Right cardiac atrium (tissue), 5 donors: ENCODE measurements at regions of chr17 and their contacts with region 1.

Region 1: GRCh38 chr17:52106638-52107261 is 51.8 kb downstream of the CA10 start:
- DNase-seq: peak in 2 of 3 donors; percentile 27 to 61
- ATAC-seq: no peak
- H3K4me3 ChIP-seq: no peak overlapping the region
- H3K27ac ChIP-seq: no peak overlapping the region
- H3K4me1 ChIP-seq: no peaks in the 10 kb centered on the region
- H3K27me3 ChIP-seq: no peaks in the 10 kb centered on the region

Region 2: DNA sequence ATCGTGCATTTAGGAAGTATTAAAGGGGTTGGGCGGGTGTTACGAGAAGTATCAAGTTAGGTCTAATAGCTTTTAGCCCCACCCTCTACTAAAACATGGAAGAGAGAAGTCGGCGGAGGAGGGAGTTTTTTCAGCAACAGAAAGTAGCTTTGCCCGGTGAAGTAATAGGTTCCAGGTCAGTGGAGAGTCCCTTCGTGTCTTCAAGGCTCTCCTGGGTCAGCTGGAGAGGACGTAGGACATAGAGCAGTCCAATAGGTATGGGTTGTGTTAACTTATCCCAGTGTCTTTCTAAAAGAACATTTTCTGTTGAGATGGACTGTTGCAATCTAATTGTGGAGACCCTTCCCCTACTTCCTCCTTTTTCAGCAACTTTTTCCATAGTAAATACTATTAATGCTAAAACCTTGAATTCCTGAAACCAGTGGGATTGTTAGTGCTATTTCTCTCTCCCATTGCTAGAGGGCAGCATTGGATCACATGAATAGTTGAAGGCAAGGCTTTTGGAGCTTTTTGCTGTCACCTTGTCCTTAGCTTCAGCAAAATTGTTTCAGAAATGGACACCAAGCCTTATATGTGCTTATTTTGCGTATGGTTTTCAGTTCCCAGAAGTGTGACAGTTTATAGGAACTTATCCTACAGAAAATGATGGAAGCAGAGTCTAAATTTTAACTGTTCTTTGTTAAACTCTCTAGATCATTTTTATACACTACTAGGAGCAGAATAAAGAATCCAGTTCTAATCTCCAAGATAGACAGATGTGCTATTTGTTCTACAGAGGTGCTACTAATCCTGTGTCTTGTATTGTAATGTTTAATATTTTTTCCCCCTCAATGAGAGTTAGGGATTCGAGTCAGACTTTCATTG is 808.0 kb before region 1 on chr17:
- intact Hi-C with region 1: loop called in 1 of 4 experiments (anchors 10 kb)
- DNase-seq: no peak
- ATAC-seq: peak in 1 of 2 donors; percentile 22
- H3K4me3 ChIP-seq: no peak overlapping the region
- H3K27ac ChIP-seq: no peak overlapping the region
- H3K4me1 ChIP-seq: no peaks in the 10 kb centered on the region
- H3K27me3 ChIP-seq: no peaks in the 10 kb centered on the region

Region 3: GRCh38 chr17:51371732-51372151 is 735.0 kb before region 1 on chr17:
- intact Hi-C with region 1: loop called in 1 of 4 experiments (anchors 5 kb)
- DNase-seq: peak in 2 of 3 donors; percentile 31 to 49
- ATAC-seq: peak; percentile 83 to 93
- H3K4me3 ChIP-seq: no peak overlapping the region
- H3K27ac ChIP-seq: no peak overlapping the region
- H3K4me1 ChIP-seq: no peaks in the 10 kb centered on the region
- H3K27me3 ChIP-seq: no peaks in the 10 kb centered on the region

Region 4: GRCh38 chr17:51764387-51764972 is 342.3 kb before region 1 on chr17:
- intact Hi-C with region 1: loop called in 2 of 4 experiments (anchors 5 to 10 kb)
- DNase-seq: peak in 2 of 3 donors; percentile 13 to 47
- ATAC-seq: peak; percentile 82 to 87
- H3K4me3 ChIP-seq: no peak overlapping the region
- H3K27ac ChIP-seq: no peak overlapping the region
- H3K4me1 ChIP-seq: no peaks in the 10 kb centered on the region
- H3K27me3 ChIP-seq: peaks cover 2% of the 10 kb centered on the region